Activated CD4-positive, alpha-beta T cell treated with anti-CD3 and anti-CD28 coated beads for 36 hours (primary cell): ENCODE measurements at regions of chr19 and their contacts with region 1.

Region 1: GRCh38 chr19:35740423-35741202 is 1.6 kb downstream of the IGFLR1 start:
- DNase-seq: peak; percentile 99
- ATAC-seq: peak; percentile 67
- H3K4me3 Mint-ChIP-seq: peak overlapping the region; percentile 82
- H3K27ac Mint-ChIP-seq: peak overlapping the region; percentile 96
- H3K4me1 Mint-ChIP-seq: peaks cover 28% of the 10 kb centered on the region
- H3K27me3 Mint-ChIP-seq: no peaks in the 10 kb centered on the region

Region 2: DNA sequence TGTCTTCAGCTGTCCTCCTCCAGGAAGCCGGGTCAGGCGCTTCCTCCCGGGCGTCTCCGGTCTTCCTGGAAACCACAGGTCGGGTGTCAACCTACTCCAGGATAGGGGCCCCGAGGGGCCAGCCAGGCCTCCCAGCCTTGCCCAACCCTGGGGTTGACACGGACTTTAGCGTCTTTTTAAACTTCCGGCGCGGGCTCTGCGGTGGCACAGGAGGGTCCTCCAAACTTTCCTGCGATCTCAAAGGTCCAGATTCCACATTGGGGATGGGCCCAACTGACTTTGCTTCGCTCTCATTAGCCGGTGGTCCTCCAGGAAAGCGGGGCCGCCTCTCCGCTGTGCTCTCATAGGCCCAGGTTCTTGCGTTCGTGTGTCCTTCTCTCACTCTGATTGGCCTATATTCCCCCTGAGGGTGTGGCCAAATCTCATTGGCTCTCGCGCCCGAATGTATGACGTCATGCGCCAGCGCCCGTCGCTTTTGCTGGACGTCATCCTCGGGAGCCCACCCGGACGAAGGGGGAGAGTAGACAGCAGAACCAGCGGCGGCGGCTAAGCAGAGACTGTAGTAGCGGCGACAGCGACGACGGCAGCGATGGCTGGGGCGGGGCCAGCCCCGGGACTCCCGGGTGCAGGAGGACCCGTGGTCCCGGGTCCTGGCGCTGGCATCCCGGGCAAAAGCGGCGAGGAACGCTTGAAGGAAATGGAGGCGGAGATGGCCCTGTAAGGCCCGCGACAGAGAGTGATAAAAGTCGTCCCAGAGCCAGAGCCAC is 111.9 kb before region 1 on chr19 and contains the start of gene RBM42:
- CTCF ChIA-PET with region 1: no interaction called
- POLR2A ChIA-PET with region 1: no interaction called
- intact Hi-C with region 1: loop called in 1 of 2 experiments (anchors 1 kb)
- DNase-seq: peak; percentile 97
- ATAC-seq: peak; percentile 100
- H3K4me3 Mint-ChIP-seq: peak within 1 kb of the TSS; percentile 98
- H3K27ac Mint-ChIP-seq: peak within 1 kb of the TSS; percentile 98
- H3K4me1 Mint-ChIP-seq: peaks cover 12% of the 10 kb centered on the region
- H3K27me3 Mint-ChIP-seq: no peaks in the 10 kb centered on the region
- total RNA-seq, gene RBM42: 87.5 to 94.4 TPM

Region 3: GRCh38 chr19:35693830-35694599 is 46.6 kb before region 1 on chr19:
- CTCF ChIA-PET with region 1: interaction called, 5 read pairs
- POLR2A ChIA-PET with region 1: no interaction called
- intact Hi-C with region 1: loop called (anchors 1 to 2 kb)
- DNase-seq: peak; percentile 95
- ATAC-seq: peak; percentile 97
- H3K4me3 Mint-ChIP-seq: no peak overlapping the region
- H3K27ac Mint-ChIP-seq: peak overlapping the region; percentile 43
- H3K4me1 Mint-ChIP-seq: peaks cover 17% of the 10 kb centered on the region
- H3K27me3 Mint-ChIP-seq: no peaks in the 10 kb centered on the region

Region 4: GRCh38 chr19:35710784-35711723 is 29.6 kb before region 1 on chr19:
- CTCF ChIA-PET with region 1: interaction called, 14 read pairs
- POLR2A ChIA-PET with region 1: interaction called, 8 read pairs
- intact Hi-C with region 1: no loop called
- DNase-seq: peak; percentile 88
- ATAC-seq: peak; percentile 48
- H3K4me3 Mint-ChIP-seq: peak overlapping the region; percentile 56
- H3K27ac Mint-ChIP-seq: peak overlapping the region; percentile 100
- H3K4me1 Mint-ChIP-seq: peaks cover 43% of the 10 kb centered on the region
- H3K27me3 Mint-ChIP-seq: no peaks in the 10 kb centered on the region

Region 5: DNA sequence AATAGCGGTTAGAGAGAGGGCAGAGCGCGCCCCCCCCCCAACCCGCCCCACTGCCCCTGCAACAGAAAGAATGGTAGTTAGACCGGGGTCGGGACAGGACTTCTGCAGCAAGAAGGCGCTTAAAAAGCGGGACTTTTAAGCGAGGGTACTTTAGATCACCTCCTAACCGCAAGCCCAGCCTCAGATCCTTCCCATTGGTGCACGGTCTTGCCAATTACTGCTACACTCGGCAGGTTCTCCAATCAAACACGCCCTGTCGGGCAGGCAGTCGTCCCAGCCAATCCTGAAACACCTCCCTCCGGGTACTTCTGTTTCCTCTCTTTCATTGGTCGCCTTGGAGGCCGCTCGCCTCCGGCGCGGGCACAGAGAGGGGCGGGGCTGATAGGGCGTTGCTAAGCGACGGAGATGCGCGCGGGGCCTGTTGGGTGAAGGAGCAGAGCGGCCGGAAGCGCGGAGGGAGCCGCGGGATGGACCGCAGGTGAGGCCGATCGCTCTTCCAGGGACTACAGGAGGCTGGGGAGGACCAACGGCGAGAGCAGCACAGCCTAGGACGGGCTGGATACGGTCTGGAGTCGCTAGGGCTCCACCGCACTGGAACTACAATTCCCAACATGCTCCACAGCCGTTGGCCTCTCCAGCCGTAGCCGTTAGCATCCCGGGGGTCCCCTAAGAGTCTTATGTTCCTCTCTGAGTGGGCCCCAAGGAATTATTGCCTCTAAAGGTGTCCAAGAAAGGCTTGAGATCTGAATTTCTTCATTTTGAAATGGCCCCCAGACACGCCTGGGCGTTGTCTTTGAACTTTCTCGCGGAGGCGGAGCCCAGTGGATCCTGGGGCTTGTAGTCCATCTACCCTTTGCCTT is 17.4 kb after region 1 on chr19 and contains the start of gene PROSER3:
- CTCF ChIA-PET with region 1: interaction called, 3 read pairs
- POLR2A ChIA-PET with region 1: no interaction called
- intact Hi-C with region 1: loop called (anchors 1 kb)
- DNase-seq: peak; percentile 99
- ATAC-seq: peak; percentile 98
- H3K4me3 Mint-ChIP-seq: peak within 1 kb of the TSS; percentile 85
- H3K27ac Mint-ChIP-seq: peak within 1 kb of the TSS; percentile 91
- H3K4me1 Mint-ChIP-seq: peaks cover 29% of the 10 kb centered on the region
- H3K27me3 Mint-ChIP-seq: peaks cover 4% of the 10 kb centered on the region
- total RNA-seq, gene PROSER3: 39.8 to 62.8 TPM

Region 6: DNA sequence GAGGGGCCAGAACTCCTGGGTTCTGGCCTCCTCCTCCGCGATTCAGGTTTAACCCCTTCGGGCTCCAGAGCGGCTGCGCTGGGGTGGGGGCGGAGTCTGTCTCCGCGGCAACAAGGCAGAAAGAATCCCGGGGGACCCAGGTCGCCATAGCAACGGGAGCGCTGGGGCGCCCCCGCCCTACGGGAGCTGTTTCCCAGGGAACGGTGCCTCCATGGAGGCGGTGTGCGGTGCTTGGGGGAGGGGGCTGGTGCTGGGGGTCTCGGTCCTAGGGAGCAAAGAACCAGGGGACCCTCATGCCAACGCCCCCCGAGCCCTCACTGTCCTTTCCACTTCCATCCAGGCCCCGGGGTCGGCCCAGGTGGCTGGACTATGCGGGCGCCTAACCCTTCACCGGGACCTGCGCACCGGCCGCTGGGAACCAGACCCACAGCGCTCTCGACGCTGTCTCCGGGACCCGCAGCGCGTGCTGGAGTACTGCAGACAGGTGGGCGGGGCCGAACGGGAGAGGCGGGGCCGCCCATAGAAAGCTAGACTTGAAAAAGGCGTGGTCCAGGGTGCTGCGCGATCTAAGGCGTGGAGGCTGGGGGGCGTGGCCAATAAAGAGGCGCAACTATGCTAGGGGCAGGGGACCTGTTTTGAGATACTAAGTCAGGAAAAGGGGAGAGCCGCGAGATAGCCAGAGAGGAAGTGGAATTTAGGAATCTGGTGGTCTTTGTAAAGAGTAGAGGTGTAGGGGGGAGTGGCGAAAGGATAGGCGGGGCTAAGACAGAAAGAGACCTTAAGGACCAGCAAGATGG is 128.9 kb after region 1 on chr19:
- CTCF ChIA-PET with region 1: interaction called, 5 read pairs
- POLR2A ChIA-PET with region 1: no interaction called
- intact Hi-C with region 1: loop called in 1 of 2 experiments (anchors 1 kb)
- DNase-seq: peak; percentile 95
- ATAC-seq: peak; percentile 93
- H3K4me3 Mint-ChIP-seq: peak overlapping the region; percentile 52
- H3K27ac Mint-ChIP-seq: no peak overlapping the region
- H3K4me1 Mint-ChIP-seq: peaks cover 14% of the 10 kb centered on the region
- H3K27me3 Mint-ChIP-seq: peaks cover 37% of the 10 kb centered on the region

Region 7: DNA sequence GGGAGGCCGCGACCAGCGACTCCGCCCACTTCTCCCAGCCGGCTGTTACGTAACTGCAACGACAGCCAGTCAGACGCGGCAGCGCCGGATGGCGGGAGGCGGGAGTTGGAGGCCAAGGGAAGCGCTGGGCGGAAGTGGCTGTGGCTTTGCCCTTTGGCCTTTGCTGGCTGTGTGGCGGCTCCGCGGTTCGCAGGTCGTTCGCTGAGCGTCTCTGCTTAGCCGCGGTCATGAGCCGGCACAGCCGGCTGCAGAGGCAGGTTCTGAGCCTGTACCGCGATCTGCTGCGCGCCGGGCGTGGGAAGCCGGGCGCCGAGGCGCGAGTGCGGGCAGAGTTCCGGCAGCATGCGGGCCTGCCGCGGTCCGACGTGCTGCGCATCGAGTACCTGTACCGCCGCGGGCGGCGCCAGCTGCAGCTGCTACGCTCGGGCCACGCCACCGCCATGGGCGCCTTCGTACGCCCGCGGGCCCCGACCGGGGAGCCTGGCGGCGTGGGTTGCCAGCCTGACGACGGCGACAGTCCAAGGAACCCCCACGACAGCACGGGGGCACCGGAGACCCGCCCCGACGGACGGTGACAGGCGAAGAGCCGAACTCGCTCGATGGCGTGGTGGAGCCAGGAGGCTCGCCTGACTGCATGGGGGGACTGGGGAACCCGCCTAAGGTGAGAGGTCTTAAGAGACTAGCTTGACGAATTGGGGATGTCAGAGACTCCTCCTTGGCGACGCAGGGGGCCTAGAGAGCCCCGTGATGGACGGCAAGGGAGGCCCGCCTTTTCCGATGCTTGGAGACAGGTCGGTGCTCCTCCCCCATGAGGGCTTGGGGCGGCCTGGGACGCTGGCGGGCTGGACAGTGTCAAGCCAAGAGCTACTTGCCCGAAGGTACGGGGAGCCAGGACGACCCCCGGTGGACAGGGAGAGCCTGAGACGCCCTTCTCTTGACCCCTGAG is 254.7 kb after region 1 on chr19 and contains the start of gene SDHAF1:
- CTCF ChIA-PET with region 1: interaction called, 4 read pairs
- POLR2A ChIA-PET with region 1: no interaction called
- intact Hi-C with region 1: loop called in 1 of 2 experiments (anchors 5 kb)
- DNase-seq: peak; percentile 98
- ATAC-seq: peak; percentile 85
- H3K4me3 Mint-ChIP-seq: peak within 1 kb of the TSS; percentile 94
- H3K27ac Mint-ChIP-seq: peak within 1 kb of the TSS; percentile 96
- H3K4me1 Mint-ChIP-seq: peaks cover 34% of the 10 kb centered on the region
- H3K27me3 Mint-ChIP-seq: no peaks in the 10 kb centered on the region
- total RNA-seq, gene SDHAF1: 16.0 to 19.2 TPM